MCF 10A (cell line): ENCODE measurements at regions of chr13 and their contacts with region 1.

Region 1: GRCh38 chr13:113296842-113297369 is at the start of gene LAMP1:
- DNase-seq: peak; percentile 95
- H3K4me3 Mint-ChIP-seq: peak within 1 kb of the TSS; percentile 77
- H3K27ac Mint-ChIP-seq: peak within 1 kb of the TSS; percentile 97
- H3K4me1 Mint-ChIP-seq: peaks cover 18% of the 10 kb centered on the region
- H3K27me3 Mint-ChIP-seq: peaks cover 8% of the 10 kb centered on the region
- CTCF ChIP-seq: no peak
- total RNA-seq, gene LAMP1: 141 and 150 TPM in 2 replicates

Region 2: GRCh38 chr13:111900390-111901131 is 1396.3 kb before region 1 on chr13:
- CTCF ChIA-PET with region 1: no interaction called
- POLR2A ChIA-PET with region 1: no interaction called
- intact Hi-C with region 1: no loop called
- DNase-seq: no peak
- H3K4me3 Mint-ChIP-seq: no peak overlapping the region
- H3K27ac Mint-ChIP-seq: no peak overlapping the region
- H3K4me1 Mint-ChIP-seq: no peaks in the 10 kb centered on the region
- H3K27me3 Mint-ChIP-seq: no peaks in the 10 kb centered on the region
- CTCF ChIP-seq: no peak

Region 3: GRCh38 chr13:113029487-113030258 is 267.2 kb before region 1 on chr13:
- CTCF ChIA-PET with region 1: no interaction called
- POLR2A ChIA-PET with region 1: no interaction called
- intact Hi-C with region 1: loop called (anchors 10 kb)
- DNase-seq: peak; percentile 23
- H3K4me3 Mint-ChIP-seq: no peak overlapping the region
- H3K27ac Mint-ChIP-seq: no peak overlapping the region
- H3K4me1 Mint-ChIP-seq: no peaks in the 10 kb centered on the region
- H3K27me3 Mint-ChIP-seq: peaks cover 60% of the 10 kb centered on the region
- CTCF ChIP-seq: peak; percentile 71